Heart right ventricle (tissue), 16 donors: ENCODE measurements at regions of chr18 and their contacts with region 1.

Region 1: GRCh38 chr18:68569936-68570335 is 145.0 kb downstream of the TMX3 start:
- DNase-seq: no peak
- ATAC-seq: no peak
- H3K4me3 ChIP-seq: no peak overlapping the region
- H3K27ac ChIP-seq: no peak overlapping the region
- H3K4me1 ChIP-seq: no peaks in the 10 kb centered on the region
- H3K27me3 ChIP-seq: no peaks in the 10 kb centered on the region
- CTCF ChIP-seq: no peak

Region 2: DNA sequence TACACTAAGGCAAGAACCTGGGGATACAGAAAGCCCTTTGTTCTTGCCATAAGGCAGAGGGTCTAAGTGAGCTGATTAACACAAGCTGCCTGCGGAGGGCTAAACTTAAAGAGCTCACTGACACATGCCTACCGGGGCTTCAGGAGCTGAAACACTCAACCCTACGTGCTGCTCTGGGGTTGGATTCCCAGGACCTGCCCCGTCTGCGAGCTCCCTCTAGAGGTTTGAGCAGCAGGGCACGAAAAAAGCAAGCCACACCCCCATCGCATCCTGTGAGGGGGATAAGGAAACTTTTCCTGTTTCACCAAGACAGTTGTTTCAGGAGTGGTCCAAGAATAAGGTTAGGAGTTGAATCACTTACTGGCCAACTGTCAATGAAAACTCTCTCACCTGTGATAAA is 417.2 kb before region 1 on chr18:
- intact Hi-C with region 1: no loop called
- DNase-seq: no peak
- ATAC-seq: no peak
- H3K4me3 ChIP-seq: no peak overlapping the region
- H3K27ac ChIP-seq: no peak overlapping the region
- H3K4me1 ChIP-seq: no peaks in the 10 kb centered on the region
- H3K27me3 ChIP-seq: no peaks in the 10 kb centered on the region
- CTCF ChIP-seq: no peak

Region 3: GRCh38 chr18:68519336-68519735 is 50.6 kb before region 1 on chr18:
- intact Hi-C with region 1: loop called in 1 of 10 experiments (anchors 10 kb)
- DNase-seq: no peak
- ATAC-seq: no peak
- H3K4me3 ChIP-seq: no peak overlapping the region
- H3K27ac ChIP-seq: no peak overlapping the region
- H3K4me1 ChIP-seq: no peaks in the 10 kb centered on the region
- H3K27me3 ChIP-seq: no peaks in the 10 kb centered on the region
- CTCF ChIP-seq: no peak

Region 4: GRCh38 chr18:68666381-68666780 is 96.4 kb after region 1 on chr18:
- intact Hi-C with region 1: no loop called
- DNase-seq: no peak
- ATAC-seq: peak in 3 of 8 donors; percentile 58 to 84 (median 75)
- H3K4me3 ChIP-seq: no peak overlapping the region
- H3K27ac ChIP-seq: no peak overlapping the region
- H3K4me1 ChIP-seq: no peaks in the 10 kb centered on the region
- H3K27me3 ChIP-seq: no peaks in the 10 kb centered on the region
- CTCF ChIP-seq: no peak